Ovary (tissue), 10 donors: ENCODE measurements at regions of chr11 and their contacts with region 1.

Region 1: DNA sequence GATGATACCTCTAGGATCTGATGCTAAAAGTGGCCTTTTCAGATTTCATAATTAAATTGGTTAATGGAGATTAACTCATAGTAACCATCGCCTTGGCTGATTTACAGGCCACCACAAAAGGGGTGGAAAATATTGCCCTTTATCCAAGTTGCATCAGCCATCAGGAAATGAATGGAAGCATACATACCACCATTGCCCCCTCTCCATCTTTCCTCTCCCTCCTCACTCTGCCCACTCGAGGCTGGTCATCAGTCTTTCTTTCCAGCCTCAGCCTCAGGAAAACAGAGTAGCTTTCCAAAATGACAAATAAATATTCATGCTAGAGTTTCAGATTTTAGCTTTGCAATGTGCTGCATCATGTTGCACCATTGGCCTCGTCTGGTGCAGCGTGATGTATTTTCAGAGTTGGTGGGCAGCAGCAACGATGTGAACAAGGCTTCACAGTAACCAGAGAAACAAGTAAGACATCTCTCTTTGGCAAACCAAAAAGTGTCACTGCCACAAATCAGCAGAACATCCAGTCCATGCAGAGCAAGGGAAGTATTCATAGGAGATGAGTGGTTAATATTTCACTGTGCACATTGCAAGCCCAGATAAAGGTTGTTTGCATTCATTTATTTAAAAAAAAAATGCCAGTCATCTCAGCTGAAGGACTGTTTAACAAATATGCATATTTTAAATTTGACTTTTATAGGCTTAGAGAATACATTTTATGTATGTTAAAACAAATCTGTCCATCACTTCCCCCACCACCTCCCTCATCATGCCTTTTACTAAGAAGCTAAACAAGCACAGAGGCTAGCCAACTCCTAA is 136.7 kb upstream of the FAT3 start:
- DNase-seq: no peak
- H3K4me3 ChIP-seq: no peak overlapping the region
- H3K27ac ChIP-seq: no peak overlapping the region
- H3K4me1 ChIP-seq: no peaks in the 10 kb centered on the region
- H3K27me3 ChIP-seq: no peaks in the 10 kb centered on the region
- CTCF ChIP-seq: no peak
- EP300 ChIP-seq: no peak
- POLR2A ChIP-seq: no peak

Region 2: DNA sequence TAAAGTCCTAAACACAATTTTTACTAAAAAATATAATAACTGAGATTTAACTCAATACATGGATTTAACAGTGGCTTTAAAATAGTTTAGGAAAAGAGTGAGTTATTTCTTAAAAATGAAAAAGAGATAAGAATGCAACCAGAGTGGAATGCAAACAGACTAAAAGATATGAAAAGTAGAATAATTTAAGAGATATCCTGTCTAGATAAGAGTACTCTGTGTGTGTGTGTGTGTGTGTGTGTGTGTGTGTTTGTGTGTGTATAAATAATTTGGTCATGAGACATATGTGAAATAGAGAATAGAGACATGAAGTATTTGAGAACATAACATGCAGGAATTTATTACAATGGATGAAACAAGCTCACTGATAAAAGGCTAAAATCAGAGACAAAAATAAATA is 878.2 kb before region 1 on chr11:
- intact Hi-C with region 1: loop called in 1 of 4 experiments (anchors 5 kb)
- DNase-seq: no peak
- H3K4me3 ChIP-seq: no peak overlapping the region
- H3K27ac ChIP-seq: no peak overlapping the region
- H3K4me1 ChIP-seq: no peaks in the 10 kb centered on the region
- H3K27me3 ChIP-seq: no peaks in the 10 kb centered on the region
- CTCF ChIP-seq: no peak
- EP300 ChIP-seq: no peak
- POLR2A ChIP-seq: no peak

Region 3: GRCh38 chr11:92141159-92141558 is 53.2 kb after region 1 on chr11:
- intact Hi-C with region 1: no loop called
- DNase-seq: no peak
- H3K4me3 ChIP-seq: no peak overlapping the region
- H3K27ac ChIP-seq: no peak overlapping the region
- H3K4me1 ChIP-seq: no peaks in the 10 kb centered on the region
- H3K27me3 ChIP-seq: no peaks in the 10 kb centered on the region
- CTCF ChIP-seq: no peak
- EP300 ChIP-seq: no peak
- POLR2A ChIP-seq: no peak

Region 4: DNA sequence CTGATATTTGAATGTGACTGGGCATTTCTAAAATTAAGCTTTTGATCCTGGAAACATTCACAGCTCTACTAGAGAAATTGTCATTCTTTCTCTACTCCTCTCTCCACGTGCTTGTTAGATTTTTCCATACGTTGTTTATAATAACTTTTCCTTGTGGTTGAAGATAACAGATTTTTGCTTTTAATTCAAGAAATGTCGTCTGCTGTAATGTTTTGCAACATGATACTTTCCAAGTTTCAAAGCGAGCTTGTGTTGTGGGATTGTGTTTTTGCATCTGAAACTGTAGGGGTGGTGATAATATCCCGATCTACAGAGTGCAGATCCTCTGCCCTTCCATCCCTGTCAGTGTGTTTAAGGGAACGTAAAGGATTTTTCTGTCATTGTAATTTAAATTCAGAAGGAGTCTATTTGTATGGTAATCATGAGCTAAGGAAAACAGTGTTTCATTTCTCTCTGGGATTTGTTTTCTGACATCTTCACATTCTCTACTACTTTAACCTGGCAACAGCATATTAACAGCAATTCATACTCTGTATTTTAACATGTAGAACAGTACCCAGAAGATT is 458.1 kb after region 1 on chr11:
- intact Hi-C with region 1: no loop called
- DNase-seq: no peak
- H3K4me3 ChIP-seq: no peak overlapping the region
- H3K27ac ChIP-seq: no peak overlapping the region
- H3K4me1 ChIP-seq: no peaks in the 10 kb centered on the region
- H3K27me3 ChIP-seq: no peaks in the 10 kb centered on the region
- CTCF ChIP-seq: no peak
- EP300 ChIP-seq: no peak
- POLR2A ChIP-seq: no peak